ENCODE measurements at regions of chr22 and their contacts with region 1.

Region 1: GRCh38 chr22:45742866-45743450 is 71.3 kb downstream of the ATXN10 start:
- DNase-seq: peak; percentile 73
- H3K4me3 Mint-ChIP-seq: peak overlapping the region; percentile 44
- H3K27ac Mint-ChIP-seq: peak overlapping the region; percentile 76
- H3K4me1 Mint-ChIP-seq: peaks cover 71% of the 10 kb centered on the region
- H3K27me3 Mint-ChIP-seq: no peaks in the 10 kb centered on the region
- CTCF ChIP-seq: no peak

Region 2: GRCh38 chr22:45775569-45776312 is 32.8 kb after region 1 on chr22:
- CTCF ChIA-PET with region 1: interaction called, 3 read pairs
- intact Hi-C with region 1: loop called (anchors 2 kb)
- DNase-seq: no peak
- H3K4me3 Mint-ChIP-seq: peak overlapping the region; percentile 44
- H3K27ac Mint-ChIP-seq: peak overlapping the region; percentile 75
- H3K4me1 Mint-ChIP-seq: peaks cover 72% of the 10 kb centered on the region
- H3K27me3 Mint-ChIP-seq: no peaks in the 10 kb centered on the region
- CTCF ChIP-seq: no peak

Measured in Calu3 (cell line).